ENCODE measurements at regions of chr3 and their contacts with region 1.

Region 1: GRCh38 chr3:8622873-8623691 is 21.5 kb downstream of the SSUH2 start:
- DNase-seq: peak; percentile 66 to 85
- ATAC-seq: peak; percentile 84 to 97
- H3K4me3 ChIP-seq: no peak overlapping the region
- H3K27ac ChIP-seq: peak overlapping the region; percentile 47 to 70; a peak in 5 of 6 replicates
- H3K4me1 ChIP-seq: peaks cover 18% of the 10 kb centered on the region
- CTCF ChIP-seq: peak; percentile 94
- EP300 ChIP-seq: no peak
- POLR2A ChIP-seq: no peak
- RAD21 ChIP-seq: peak; percentile 94 to 96

Region 2: GRCh38 chr3:8324740-8325139 is 298.3 kb before region 1 on chr3:
- CTCF ChIA-PET with region 1: interaction called, 10 read pairs
- POLR2A ChIA-PET with region 1: no interaction called
- DNase-seq: peak; percentile 25 to 55
- ATAC-seq: peak; percentile 97 to 100
- H3K4me3 ChIP-seq: no peak overlapping the region
- H3K27ac ChIP-seq: no peak overlapping the region
- H3K4me1 ChIP-seq: 0 out of 3 replicates have a peak, but pooled peaks cover 7% of the 10 kb centered on the region
- CTCF ChIP-seq: peak; percentile 52
- EP300 ChIP-seq: no peak
- POLR2A ChIP-seq: no peak
- RAD21 ChIP-seq: peak; percentile 52 to 77

Region 3: GRCh38 chr3:8607234-8608040 is 15.6 kb before region 1 on chr3:
- CTCF ChIA-PET with region 1: interaction called, 29 read pairs
- POLR2A ChIA-PET with region 1: no interaction called
- DNase-seq: peak; percentile 25 to 64
- ATAC-seq: peak; percentile 80 to 93; a peak in 4 of 6 replicates
- H3K4me3 ChIP-seq: no peak overlapping the region
- H3K27ac ChIP-seq: no peak overlapping the region
- H3K4me1 ChIP-seq: 0 out of 3 replicates have a peak, but pooled peaks cover 3% of the 10 kb centered on the region
- CTCF ChIP-seq: peak; percentile 37
- EP300 ChIP-seq: no peak
- POLR2A ChIP-seq: no peak
- RAD21 ChIP-seq: peak; percentile 68 to 72

Region 4: GRCh38 chr3:8635631-8636030 is 12.5 kb after region 1 on chr3:
- CTCF ChIA-PET with region 1: interaction called, 11 read pairs
- POLR2A ChIA-PET with region 1: no interaction called
- DNase-seq: no peak
- ATAC-seq: no peak
- H3K4me3 ChIP-seq: no peak overlapping the region
- H3K27ac ChIP-seq: no peak overlapping the region
- H3K4me1 ChIP-seq: peaks cover 22% of the 10 kb centered on the region
- CTCF ChIP-seq: no peak
- EP300 ChIP-seq: no peak
- POLR2A ChIP-seq: no peak
- RAD21 ChIP-seq: no peak

Region 5: GRCh38 chr3:8663177-8664061 is 40.3 kb after region 1 on chr3:
- CTCF ChIA-PET with region 1: interaction called, 10 read pairs
- POLR2A ChIA-PET with region 1: no interaction called
- DNase-seq: peak; percentile 79 to 82
- ATAC-seq: peak; percentile 67 to 88
- H3K4me3 ChIP-seq: no peak overlapping the region
- H3K27ac ChIP-seq: peak overlapping the region; percentile 8 to 61; a peak in 3 of 6 replicates
- H3K4me1 ChIP-seq: peaks cover 25% of the 10 kb centered on the region
- CTCF ChIP-seq: peak; percentile 66
- EP300 ChIP-seq: no peak
- POLR2A ChIP-seq: no peak
- RAD21 ChIP-seq: peak; percentile 69 to 73

Region 6: DNA sequence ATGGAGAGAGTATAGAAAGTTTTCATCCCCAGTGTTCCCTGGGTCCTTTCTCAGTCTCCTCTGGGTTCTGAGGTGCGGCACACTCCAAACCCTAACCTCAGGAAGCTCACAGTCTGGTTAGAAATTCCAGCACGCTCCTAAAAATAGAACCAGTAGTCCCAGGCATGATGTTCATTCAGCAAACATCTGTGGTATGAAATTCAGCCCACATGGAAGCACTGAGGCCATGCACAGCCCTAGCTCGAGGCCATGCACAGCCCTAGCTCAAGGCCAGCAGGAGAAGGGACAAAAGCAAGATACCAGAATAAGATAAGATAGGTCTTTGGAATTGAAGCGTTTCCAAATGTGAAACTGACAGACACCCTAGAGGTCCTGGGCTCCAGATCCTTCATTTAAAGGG is 228.6 kb after region 1 on chr3:
- CTCF ChIA-PET with region 1: no interaction called
- POLR2A ChIA-PET with region 1: no interaction called
- DNase-seq: peak in 1 of 2 experiments; percentile 19
- ATAC-seq: peak in 1 of 2 experiments; percentile 74; a peak in 3 of 6 replicates
- H3K4me3 ChIP-seq: no peak overlapping the region
- H3K27ac ChIP-seq: 0 out of 6 replicates have a peak overlapping the region, but pooled peaks of 1 of the 2 experiments have one; percentile 3
- H3K4me1 ChIP-seq: peaks cover 14% of the 10 kb centered on the region
- CTCF ChIP-seq: no peak
- EP300 ChIP-seq: no peak
- POLR2A ChIP-seq: no peak
- RAD21 ChIP-seq: no peak

Measured in A549 (cell line).